GM12878 (cell line): ENCODE measurements at regions of chr1 and their contacts with region 1.

Region 1: GRCh38 chr1:207579436-207579799 is 65.5 kb upstream of the CR1L start:
- DNase-seq: peak; percentile 17
- ATAC-seq: peak; percentile 99
- H3K4me3 ChIP-seq: no peak overlapping the region
- H3K27ac ChIP-seq: no peak overlapping the region
- H3K4me1 ChIP-seq: no peaks in the 10 kb centered on the region
- H3K27me3 ChIP-seq: no peaks in the 10 kb centered on the region
- CTCF ChIP-seq: peak; percentile 49 to 60 (median 55); a peak in 5 of 6 replicates
- EP300 ChIP-seq: no peak
- POLR2A ChIP-seq: no peak
- RAD21 ChIP-seq: peak; percentile 58

Region 2: DNA sequence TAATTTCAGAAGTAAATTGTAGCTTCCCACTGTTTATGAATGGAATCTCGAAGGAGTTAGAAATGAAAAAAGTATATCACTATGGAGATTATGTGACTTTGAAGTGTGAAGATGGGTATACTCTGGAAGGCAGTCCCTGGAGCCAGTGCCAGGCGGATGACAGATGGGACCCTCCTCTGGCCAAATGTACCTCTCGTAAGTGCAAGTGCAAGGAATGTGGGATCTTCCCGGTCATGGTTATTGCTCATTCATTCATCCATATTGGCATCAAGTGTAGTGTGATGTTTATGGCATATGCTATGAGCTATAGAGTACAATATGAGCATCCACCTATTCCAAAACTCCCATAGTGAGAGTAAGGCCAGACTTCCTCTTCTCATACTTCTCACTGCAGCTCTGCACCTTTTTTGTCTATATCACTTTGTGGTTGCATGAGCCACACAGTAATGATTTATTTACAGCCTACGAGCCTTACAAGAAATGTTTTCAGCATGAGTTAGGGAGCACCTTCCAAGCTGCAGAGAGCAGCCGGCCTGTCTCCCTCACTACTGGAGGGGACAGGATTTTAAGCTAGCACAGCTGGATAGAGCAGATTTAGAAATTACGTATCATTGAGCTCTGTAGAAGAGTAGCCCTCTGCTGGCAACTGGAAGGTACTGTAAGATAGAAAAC is 40.6 kb after region 1 on chr1:
- CTCF ChIA-PET with region 1: interaction called, 13 read pairs
- POLR2A ChIA-PET with region 1: no interaction called
- RAD21 ChIA-PET with region 1: interaction called, 3 read pairs
- SMC1A ChIA-PET with region 1: interaction called, 3 read pairs
- in situ Hi-C with region 1: no loop called
- intact Hi-C with region 1: no loop called
- DNase-seq: no peak
- ATAC-seq: peak; percentile 96
- H3K4me3 ChIP-seq: no peak overlapping the region
- H3K27ac ChIP-seq: no peak overlapping the region
- H3K4me1 ChIP-seq: no peaks in the 10 kb centered on the region
- H3K27me3 ChIP-seq: no peaks in the 10 kb centered on the region
- CTCF ChIP-seq: peak; percentile 56 to 80 (median 68)
- EP300 ChIP-seq: no peak
- POLR2A ChIP-seq: no peak
- RAD21 ChIP-seq: peak; percentile 39; the same call in 1 of the 2 replicates

Region 3: GRCh38 chr1:207672522-207673130 is 93.2 kb after region 1 on chr1:
- CTCF ChIA-PET with region 1: interaction called, 18 read pairs
- POLR2A ChIA-PET with region 1: no interaction called
- RAD21 ChIA-PET with region 1: no interaction called
- SMC1A ChIA-PET with region 1: interaction called, 3 read pairs
- in situ Hi-C with region 1: no loop called
- intact Hi-C with region 1: loop called (anchors 10 kb)
- DNase-seq: no peak
- ATAC-seq: peak; percentile 58; the same call in 2 of the 3 replicates
- H3K4me3 ChIP-seq: no peak overlapping the region
- H3K27ac ChIP-seq: no peak overlapping the region
- H3K4me1 ChIP-seq: peaks cover 5% of the 10 kb centered on the region
- H3K27me3 ChIP-seq: peaks cover 0 to 4% of the 10 kb centered on the region in 2 experiments; a peak in 2 of 4 replicates
- CTCF ChIP-seq: peak; percentile 49 to 70 (median 60); a peak in 5 of 6 replicates
- EP300 ChIP-seq: no peak
- POLR2A ChIP-seq: no peak
- RAD21 ChIP-seq: peak; percentile 80